MCF 10A (cell line): ENCODE measurements at regions of chr4 and their contacts with region 1.

Region 1: DNA sequence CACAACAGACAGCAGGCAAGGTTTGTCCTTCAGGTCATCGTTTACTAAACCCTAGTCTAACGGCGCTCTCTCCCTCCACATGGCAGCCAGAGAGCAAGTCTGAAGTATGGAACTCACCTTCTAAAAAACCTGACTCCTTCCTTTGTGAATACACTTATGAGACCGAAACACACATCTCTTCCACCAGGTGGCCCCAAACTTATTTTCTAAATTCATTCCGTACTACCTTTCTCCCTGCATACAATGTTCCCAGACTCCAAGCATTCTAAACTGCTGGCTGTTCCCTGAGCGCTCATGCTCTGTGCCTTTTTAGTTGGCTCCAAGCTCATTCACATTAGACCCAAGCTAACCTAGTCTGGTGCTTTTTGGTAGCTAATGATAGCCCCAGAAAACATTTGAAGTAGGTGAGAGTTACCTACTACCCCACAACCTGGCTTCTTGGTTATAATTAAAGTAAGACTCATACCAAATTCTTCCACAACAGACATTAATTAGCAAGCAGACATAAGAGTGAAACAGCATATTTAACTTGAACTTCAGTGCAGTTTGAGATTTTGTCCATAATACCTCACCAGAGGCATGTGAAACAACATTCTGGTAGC is 67.6 kb upstream of the DCLK2 start:
- DNase-seq: peak; percentile 76
- H3K4me3 Mint-ChIP-seq: no peak overlapping the region
- H3K27ac Mint-ChIP-seq: no peak overlapping the region
- H3K4me1 Mint-ChIP-seq: no peaks in the 10 kb centered on the region
- H3K27me3 Mint-ChIP-seq: no peaks in the 10 kb centered on the region
- CTCF ChIP-seq: peak; percentile 64

Region 2: DNA sequence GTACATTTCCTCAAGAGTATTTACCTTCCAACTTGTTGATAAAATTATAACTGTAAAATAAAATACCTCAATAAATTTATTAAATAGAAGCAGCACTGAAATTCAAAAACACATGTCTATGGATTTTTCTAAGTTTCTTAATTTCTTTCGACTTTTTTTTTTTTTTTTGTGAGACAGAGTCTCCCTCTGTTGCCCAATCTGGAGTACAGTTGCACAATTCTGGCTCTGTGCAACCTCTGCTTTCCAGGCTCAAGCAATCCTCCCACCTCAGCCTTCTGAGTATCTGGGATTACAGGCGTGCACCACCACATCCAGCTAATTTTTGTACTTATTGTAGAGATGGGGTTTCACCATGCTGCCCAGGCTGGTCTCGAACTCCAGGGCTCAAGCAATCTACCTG is 274.8 kb before region 1 on chr4:
- CTCF ChIA-PET with region 1: no interaction called
- POLR2A ChIA-PET with region 1: no interaction called
- intact Hi-C with region 1: no loop called
- DNase-seq: peak; percentile 69
- H3K4me3 Mint-ChIP-seq: no peak overlapping the region
- H3K27ac Mint-ChIP-seq: no peak overlapping the region
- H3K4me1 Mint-ChIP-seq: no peaks in the 10 kb centered on the region
- H3K27me3 Mint-ChIP-seq: no peaks in the 10 kb centered on the region
- CTCF ChIP-seq: no peak

Region 3: DNA sequence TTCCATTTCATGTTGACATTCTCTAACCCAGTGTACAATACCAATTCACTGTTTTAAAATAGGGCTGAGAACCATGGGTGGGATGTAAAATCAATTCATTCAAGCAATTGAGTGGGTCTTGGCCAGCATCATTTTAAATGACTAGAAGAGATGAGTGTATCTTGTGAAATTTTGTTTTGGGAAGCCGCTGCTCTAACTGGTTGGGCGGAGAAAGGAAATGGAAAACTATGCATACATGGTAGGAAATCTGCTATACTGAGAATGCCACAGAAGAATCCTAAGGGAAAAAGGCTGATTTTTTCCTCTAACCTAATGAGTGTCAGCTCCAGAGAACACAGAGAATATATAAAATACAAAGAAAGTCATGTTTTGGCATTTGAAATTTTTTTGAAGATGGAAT is 12.9 kb after region 1 on chr4:
- CTCF ChIA-PET with region 1: interaction called, 12 read pairs
- POLR2A ChIA-PET with region 1: no interaction called
- intact Hi-C with region 1: no loop called
- DNase-seq: no peak
- H3K4me3 Mint-ChIP-seq: no peak overlapping the region
- H3K27ac Mint-ChIP-seq: no peak overlapping the region
- H3K4me1 Mint-ChIP-seq: no peaks in the 10 kb centered on the region
- H3K27me3 Mint-ChIP-seq: no peaks in the 10 kb centered on the region
- CTCF ChIP-seq: no peak

Region 4: GRCh38 chr4:150078637-150079581 is 68.3 kb after region 1 on chr4:
- CTCF ChIA-PET with region 1: interaction called, 4 read pairs
- POLR2A ChIA-PET with region 1: interaction called, 4 read pairs
- intact Hi-C with region 1: loop called (anchors 2 kb)
- DNase-seq: peak; percentile 58
- H3K4me3 Mint-ChIP-seq: peak overlapping the region; percentile 61
- H3K27ac Mint-ChIP-seq: no peak overlapping the region
- H3K4me1 Mint-ChIP-seq: no peaks in the 10 kb centered on the region
- H3K27me3 Mint-ChIP-seq: no peaks in the 10 kb centered on the region
- CTCF ChIP-seq: no peak

Region 5: DNA sequence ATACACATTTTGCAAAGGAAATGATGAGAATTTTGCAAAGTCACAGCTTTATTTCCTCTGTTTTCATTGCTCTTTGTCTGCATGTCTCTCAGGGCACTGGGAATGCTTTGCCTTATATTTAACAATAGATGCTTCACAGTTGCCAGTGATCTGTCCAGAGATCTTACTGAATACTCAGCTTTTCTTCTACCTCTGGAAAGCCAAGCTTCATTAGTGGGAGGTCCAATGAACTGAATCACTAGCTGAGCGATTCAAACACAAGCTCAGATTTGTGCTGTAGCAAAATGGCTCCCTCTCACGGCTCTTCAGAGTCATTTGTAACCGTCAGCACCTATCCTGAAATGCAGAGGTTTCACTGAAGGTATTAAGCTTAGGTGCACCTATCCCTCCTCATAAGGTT is 206.6 kb after region 1 on chr4:
- CTCF ChIA-PET with region 1: interaction called, 223 read pairs
- POLR2A ChIA-PET with region 1: interaction called, 3 read pairs
- intact Hi-C with region 1: loop called (anchors 1 kb)
- DNase-seq: peak; percentile 61
- H3K4me3 Mint-ChIP-seq: no peak overlapping the region
- H3K27ac Mint-ChIP-seq: no peak overlapping the region
- H3K4me1 Mint-ChIP-seq: peaks cover 16% of the 10 kb centered on the region
- H3K27me3 Mint-ChIP-seq: no peaks in the 10 kb centered on the region
- CTCF ChIP-seq: peak; percentile 49